ENCODE measurements at regions of chr17 and their contacts with region 1.

Region 1: GRCh38 chr17:15278924-15279477 is 13.9 kb upstream of the PMP22 start:
- DNase-seq: no peak
- ATAC-seq: no peak
- H3K4me3 ChIP-seq: no peak overlapping the region
- H3K27ac ChIP-seq: no peak overlapping the region
- H3K4me1 ChIP-seq: no peaks in the 10 kb centered on the region
- H3K27me3 ChIP-seq: no peaks in the 10 kb centered on the region
- CTCF ChIP-seq: no peak

Region 2: DNA sequence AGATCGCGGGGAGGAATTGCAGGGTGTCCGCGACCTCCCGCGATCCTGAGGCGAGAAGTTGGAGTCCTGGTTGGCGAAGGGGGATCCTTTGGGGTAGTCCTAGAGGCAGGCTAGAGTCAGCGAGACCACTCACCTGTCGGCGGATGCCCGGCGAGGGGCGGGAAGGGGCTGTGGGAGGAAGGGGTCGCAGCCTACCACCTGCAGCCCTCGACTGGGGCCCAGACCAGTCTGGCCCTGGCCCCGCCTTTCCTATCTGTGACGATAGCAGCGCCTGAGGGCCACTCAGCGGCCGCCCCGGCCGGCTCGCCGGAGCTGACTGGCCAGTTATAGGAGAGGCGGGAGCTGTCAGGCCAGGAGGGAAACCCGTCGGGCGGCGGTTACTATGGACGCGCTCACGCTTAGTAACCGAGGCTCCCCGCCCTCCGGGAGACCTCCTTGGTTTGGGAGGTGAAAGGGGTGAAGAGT is 62.4 kb after region 1 on chr17 and contains the start of gene TEKT3:
- intact Hi-C with region 1: loop called in 1 of 10 experiments (anchors 5 kb)
- DNase-seq: peak; percentile 84 to 88
- ATAC-seq: peak; percentile 100
- H3K4me3 ChIP-seq: peak within 1 kb of the TSS; percentile 29 to 68 (median 58)
- H3K27ac ChIP-seq: no peak within 1 kb of the TSS
- H3K4me1 ChIP-seq: peaks cover 0 to 13% (median 10%) of the 10 kb centered on the region in 9 donors
- H3K27me3 ChIP-seq: peaks cover 0 to 58% (median 11%) of the 10 kb centered on the region in 7 donors
- CTCF ChIP-seq: no peak
- total RNA-seq, gene TEKT3: 0.26 to 1.1 (median 0.68) TPM in 7 of 10 donors, not detected in the others